ENCODE measurements at regions of chr16 and their contacts with region 1.

Region 1: GRCh38 chr16:22190776-22191531 is 15.1 kb upstream of the EEF2K start:
- DNase-seq: peak; percentile 97 to 100 (median 100)
- ATAC-seq: peak; percentile 61
- H3K4me3 ChIP-seq: peak overlapping the region; percentile 62 to 66
- H3K4me3 Mint-ChIP-seq: peak overlapping the region; percentile 89
- H3K27ac ChIP-seq: peak overlapping the region; percentile 97 to 99
- H3K27ac Mint-ChIP-seq: peak overlapping the region; percentile 100
- H3K4me1 ChIP-seq: peaks cover 56% of the 10 kb centered on the region
- H3K4me1 Mint-ChIP-seq: peaks cover 69% of the 10 kb centered on the region
- H3K27me3 ChIP-seq: no peaks in the 10 kb centered on the region
- H3K27me3 Mint-ChIP-seq: peaks cover 2% of the 10 kb centered on the region
- CTCF ChIP-seq: no peak

Region 2: DNA sequence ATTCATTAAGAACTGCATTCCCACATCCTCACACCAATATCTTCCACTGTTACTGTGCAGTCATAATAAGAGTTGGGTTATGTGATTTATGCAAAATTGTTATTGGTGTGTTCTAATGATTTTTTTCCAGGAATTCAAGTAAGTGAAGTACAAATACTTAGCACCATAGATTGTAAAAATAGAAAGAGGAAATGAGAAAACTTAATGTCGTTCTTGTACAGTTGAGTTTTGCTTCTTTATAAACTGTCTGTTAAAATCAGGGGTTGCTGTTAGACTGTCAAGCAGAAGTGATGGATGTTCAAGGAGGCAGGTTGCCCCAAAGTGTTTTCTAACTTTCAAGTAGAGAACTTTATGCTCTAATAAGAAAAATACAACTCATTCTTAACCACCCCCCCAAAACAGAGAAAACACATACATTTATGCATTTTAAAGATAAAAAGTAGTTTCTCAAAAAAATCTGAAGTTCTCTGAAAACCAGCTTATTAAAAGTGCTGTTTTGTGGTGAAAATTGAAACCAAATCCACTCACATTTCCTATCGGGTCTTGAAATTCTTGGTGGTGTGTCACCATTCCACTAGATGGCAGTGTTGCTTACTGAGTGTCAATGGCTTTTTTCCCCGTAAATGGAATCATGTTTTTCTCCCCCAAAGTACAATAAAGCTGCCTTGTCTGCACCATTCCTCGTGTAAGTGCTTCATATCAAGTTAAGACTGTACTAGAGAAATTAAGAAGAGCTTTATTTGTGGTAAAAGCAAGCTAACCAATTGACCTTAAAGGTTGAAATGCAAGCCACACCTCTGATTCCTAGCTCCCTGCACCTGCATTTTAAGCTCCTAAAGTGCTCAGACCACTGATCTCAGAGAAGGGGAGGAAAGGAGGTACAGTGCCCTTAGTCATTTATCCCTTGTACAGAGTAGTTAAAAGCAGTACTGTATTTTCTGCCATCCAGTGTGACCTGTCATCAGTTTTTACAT is 533.9 kb before region 1 on chr16:
- CTCF ChIA-PET with region 1: interaction called, 5 read pairs
- POLR2A ChIA-PET with region 1: no interaction called
- intact Hi-C with region 1: loop called (anchors 5 to 10 kb)
- DNase-seq: peak in 7 of 9 experiments; percentile 22 to 83 (median 43)
- ATAC-seq: peak; percentile 36
- H3K4me3 ChIP-seq: no peak overlapping the region
- H3K4me3 Mint-ChIP-seq: no peak overlapping the region
- H3K27ac ChIP-seq: no peak overlapping the region
- H3K27ac Mint-ChIP-seq: peak overlapping the region; percentile 30
- H3K4me1 ChIP-seq: peaks cover 21% of the 10 kb centered on the region
- H3K4me1 Mint-ChIP-seq: peaks cover 35% of the 10 kb centered on the region
- H3K27me3 ChIP-seq: no peaks in the 10 kb centered on the region
- H3K27me3 Mint-ChIP-seq: no peaks in the 10 kb centered on the region
- CTCF ChIP-seq: peak; percentile 93

Region 3: GRCh38 chr16:22007509-22008214 is 183.3 kb before region 1 on chr16 and contains the start of gene MOSMO:
- CTCF ChIA-PET with region 1: interaction called, 100 read pairs
- POLR2A ChIA-PET with region 1: interaction called, 12 read pairs
- intact Hi-C with region 1: no loop called
- DNase-seq: peak; percentile 30 to 81 (median 67)
- ATAC-seq: peak; percentile 84
- H3K4me3 ChIP-seq: peak within 1 kb of the TSS; percentile 93 to 95
- H3K4me3 Mint-ChIP-seq: peak within 1 kb of the TSS; percentile 88
- H3K27ac ChIP-seq: peak within 1 kb of the TSS; percentile 70 to 75
- H3K27ac Mint-ChIP-seq: peak within 1 kb of the TSS; percentile 88
- H3K4me1 ChIP-seq: peaks cover 24% of the 10 kb centered on the region
- H3K4me1 Mint-ChIP-seq: peaks cover 46% of the 10 kb centered on the region
- H3K27me3 ChIP-seq: no peaks in the 10 kb centered on the region
- H3K27me3 Mint-ChIP-seq: no peaks in the 10 kb centered on the region
- CTCF ChIP-seq: no peak
- total RNA-seq, gene MOSMO: 2.4 TPM

Region 4: GRCh38 chr16:22161999-22162655 is 28.8 kb before region 1 on chr16 and contains the start of gene SDR42E2:
- CTCF ChIA-PET with region 1: no interaction called
- POLR2A ChIA-PET with region 1: no interaction called
- intact Hi-C with region 1: no loop called
- DNase-seq: peak; percentile 6 to 69 (median 54)
- ATAC-seq: peak; percentile 95
- H3K4me3 ChIP-seq: peak within 1 kb of the TSS; percentile 24 to 39
- H3K4me3 Mint-ChIP-seq: peak within 1 kb of the TSS; percentile 69
- H3K27ac ChIP-seq: no peak within 1 kb of the TSS
- H3K27ac Mint-ChIP-seq: no peak within 1 kb of the TSS
- H3K4me1 ChIP-seq: peaks cover 4% of the 10 kb centered on the region
- H3K4me1 Mint-ChIP-seq: peaks cover 9% of the 10 kb centered on the region
- H3K27me3 ChIP-seq: peaks cover 0 to 7% of the 10 kb centered on the region in 2 experiments
- H3K27me3 Mint-ChIP-seq: peaks cover 16% of the 10 kb centered on the region
- CTCF ChIP-seq: no peak
- total RNA-seq, gene SDR42E2: 1.1 to 1.2 TPM

Region 5: GRCh38 chr16:22206013-22206841 is 15.3 kb after region 1 on chr16 and contains the start of gene EEF2K:
- CTCF ChIA-PET with region 1: interaction called, 59 read pairs
- POLR2A ChIA-PET with region 1: interaction called, 39 read pairs
- intact Hi-C with region 1: loop called (anchors 1 kb)
- DNase-seq: peak; percentile 66 to 91 (median 79)
- ATAC-seq: peak; percentile 90
- H3K4me3 ChIP-seq: peak within 1 kb of the TSS; percentile 61 to 86
- H3K4me3 Mint-ChIP-seq: peak within 1 kb of the TSS; percentile 98
- H3K27ac ChIP-seq: peak within 1 kb of the TSS; percentile 51 to 59
- H3K27ac Mint-ChIP-seq: peak within 1 kb of the TSS; percentile 92
- H3K4me1 ChIP-seq: peaks cover 20% of the 10 kb centered on the region
- H3K4me1 Mint-ChIP-seq: peaks cover 40% of the 10 kb centered on the region
- H3K27me3 ChIP-seq: no peaks in the 10 kb centered on the region
- H3K27me3 Mint-ChIP-seq: no peaks in the 10 kb centered on the region
- CTCF ChIP-seq: peak; percentile 65
- total RNA-seq, gene EEF2K: 14.4 to 14.6 TPM

Region 6: DNA sequence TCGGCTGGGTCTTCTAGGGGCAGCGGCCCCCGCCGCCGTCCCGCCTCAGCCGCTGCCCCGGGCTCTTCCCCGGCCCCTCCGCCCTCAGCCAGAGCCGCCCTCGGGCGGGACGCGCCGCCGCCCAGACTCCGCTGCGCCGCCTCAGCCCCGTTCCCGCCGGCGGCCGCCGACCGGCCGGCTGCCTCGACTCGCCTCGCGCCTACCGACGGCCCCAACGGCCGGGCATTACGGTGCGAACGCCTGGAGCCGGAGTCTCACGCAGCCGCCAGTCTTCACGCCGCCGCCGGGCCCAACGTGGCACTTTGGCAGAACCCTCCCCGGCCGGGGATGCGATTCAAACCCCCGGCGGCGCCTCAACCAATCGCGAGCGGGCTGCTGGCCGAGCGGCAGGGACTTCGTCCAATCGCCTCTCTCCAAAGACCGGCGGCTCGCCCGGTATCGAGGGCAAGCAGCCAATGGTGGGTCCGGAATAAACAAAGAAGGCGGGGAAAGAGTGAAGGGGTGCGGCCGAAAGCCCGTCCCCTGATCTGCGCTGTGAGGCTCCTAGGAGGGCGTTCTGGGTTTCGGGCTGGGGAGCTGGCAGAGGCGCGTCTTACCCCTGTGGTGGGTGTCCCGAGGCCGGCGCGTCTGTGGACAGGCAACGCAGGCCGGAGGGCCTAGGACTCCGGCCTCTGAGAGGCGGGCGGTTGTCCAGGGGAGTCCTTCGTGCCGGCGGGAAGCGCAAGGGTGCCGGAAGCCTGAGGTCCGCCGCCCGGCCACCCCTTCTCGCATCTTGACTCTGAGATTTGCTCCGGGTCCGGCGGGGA is 183.6 kb after region 1 on chr16 and contains the start of gene CDR2:
- CTCF ChIA-PET with region 1: no interaction called
- POLR2A ChIA-PET with region 1: interaction called, 9 read pairs
- intact Hi-C with region 1: loop called (anchors 1 to 5 kb)
- DNase-seq: peak; percentile 96 to 99 (median 98)
- ATAC-seq: peak; percentile 92
- H3K4me3 ChIP-seq: peak within 1 kb of the TSS; percentile 60 to 71
- H3K4me3 Mint-ChIP-seq: peak within 1 kb of the TSS; percentile 97
- H3K27ac ChIP-seq: peak within 1 kb of the TSS; percentile 51 to 77
- H3K27ac Mint-ChIP-seq: peak within 1 kb of the TSS; percentile 95
- H3K4me1 ChIP-seq: peaks cover 34% of the 10 kb centered on the region
- H3K4me1 Mint-ChIP-seq: peaks cover 49% of the 10 kb centered on the region
- H3K27me3 ChIP-seq: no peaks in the 10 kb centered on the region
- H3K27me3 Mint-ChIP-seq: no peaks in the 10 kb centered on the region
- CTCF ChIP-seq: no peak
- total RNA-seq, gene CDR2: 119 to 120 TPM

Measured in CD8-positive, alpha-beta T cell (primary cell).